ENCODE measurements at regions of chr4 and their contacts with region 1.

Region 1: DNA sequence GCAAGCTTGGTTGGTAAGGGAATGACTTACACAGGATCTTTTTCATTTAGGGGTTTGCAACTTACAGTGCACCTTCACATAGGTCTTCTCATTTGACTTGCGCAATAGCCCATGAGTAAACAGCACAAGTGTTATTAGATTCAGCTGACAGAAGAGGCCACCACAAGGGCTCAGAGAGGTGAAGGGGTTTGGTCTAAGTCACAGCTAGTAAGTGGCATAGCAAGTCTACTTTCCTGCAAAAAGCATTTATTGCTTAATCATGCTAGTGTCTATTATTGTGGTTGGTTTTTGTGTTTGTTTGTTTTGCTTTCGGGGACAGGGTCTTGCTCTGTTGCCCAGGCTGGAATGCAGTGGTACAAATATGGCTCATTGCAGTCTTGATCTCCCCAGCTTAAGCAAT is 83.3 kb downstream of the SPRY1 start:
- DNase-seq: peak; percentile 20
- ATAC-seq: no peak
- H3K4me3 Mint-ChIP-seq: no peak overlapping the region
- H3K27ac Mint-ChIP-seq: no peak overlapping the region
- H3K4me1 Mint-ChIP-seq: peaks cover 53% of the 10 kb centered on the region
- H3K27me3 Mint-ChIP-seq: no peaks in the 10 kb centered on the region
- CTCF ChIP-seq: no peak

Region 2: DNA sequence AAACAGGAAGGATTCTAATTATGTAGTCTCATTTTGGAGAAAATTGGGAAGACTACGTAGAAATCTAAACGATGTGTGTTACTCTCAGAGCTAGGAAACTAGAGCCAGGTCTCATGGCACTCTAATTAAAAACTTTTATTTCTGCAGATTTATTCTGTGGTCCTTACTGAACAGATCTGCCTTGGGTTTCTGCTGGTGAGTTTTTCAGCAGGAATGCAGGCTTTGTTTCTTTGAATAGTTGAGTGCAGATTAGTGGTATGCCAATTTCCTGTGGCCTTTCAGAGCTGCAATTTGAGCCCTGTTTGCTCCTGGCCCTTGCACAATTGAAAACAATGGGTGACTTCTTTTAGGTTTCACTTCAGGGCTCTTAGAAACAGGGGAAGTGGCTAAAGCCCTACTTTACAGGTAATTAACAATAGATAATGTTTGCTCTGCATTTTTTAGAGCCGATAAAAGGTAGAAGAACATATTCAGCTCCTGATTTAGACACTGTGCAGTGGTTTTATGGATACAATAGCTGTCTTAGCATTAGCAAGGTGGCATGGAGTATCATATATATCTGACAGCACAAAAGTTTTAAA is 61.5 kb before region 1 on chr4:
- CTCF ChIA-PET with region 1: interaction called, 4 read pairs
- POLR2A ChIA-PET with region 1: no interaction called
- intact Hi-C with region 1: loop called (anchors 5 kb)
- DNase-seq: peak; percentile 30
- ATAC-seq: no peak
- H3K4me3 Mint-ChIP-seq: peak overlapping the region; percentile 15
- H3K27ac Mint-ChIP-seq: peak overlapping the region; percentile 100
- H3K4me1 Mint-ChIP-seq: peaks cover 84% of the 10 kb centered on the region
- H3K27me3 Mint-ChIP-seq: no peaks in the 10 kb centered on the region
- CTCF ChIP-seq: no peak

Region 3: DNA sequence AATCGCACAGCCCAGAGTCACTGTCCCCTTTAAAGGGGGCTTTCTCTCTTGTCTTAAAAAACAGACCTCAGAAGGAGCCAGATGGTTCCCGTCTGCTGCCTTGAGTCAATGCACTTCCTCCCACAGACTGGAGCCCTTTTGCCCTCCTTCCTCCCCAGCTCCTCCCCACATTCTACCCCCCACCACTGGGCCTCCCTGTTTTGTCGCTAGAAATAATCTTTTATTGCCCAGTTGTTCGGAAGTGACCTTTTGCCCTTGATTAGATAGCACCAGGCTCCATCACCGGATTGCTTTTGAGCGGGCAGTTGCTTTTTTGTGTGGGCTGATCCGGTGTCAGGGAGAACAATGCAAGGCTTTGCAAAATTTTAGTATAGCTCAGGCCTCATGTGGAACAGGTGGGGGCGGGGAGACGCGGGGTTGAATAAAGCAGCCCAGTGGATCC is 35.6 kb before region 1 on chr4:
- CTCF ChIA-PET with region 1: no interaction called
- POLR2A ChIA-PET with region 1: interaction called, 3 read pairs
- intact Hi-C with region 1: loop called (anchors 5 kb)
- DNase-seq: peak; percentile 84
- ATAC-seq: peak; percentile 86
- H3K4me3 Mint-ChIP-seq: peak overlapping the region; percentile 62
- H3K27ac Mint-ChIP-seq: peak overlapping the region; percentile 93
- H3K4me1 Mint-ChIP-seq: peaks cover 36% of the 10 kb centered on the region
- H3K27me3 Mint-ChIP-seq: no peaks in the 10 kb centered on the region
- CTCF ChIP-seq: no peak

Measured in activated CD8-positive, alpha-beta T cell treated with anti-CD3 and anti-CD28 coated beads for 36 hours (primary cell).